Dendritic cell treated with granulocyte-macrophage colony-stimulating factor and Interleukin-4, amounts not matched to agents 40 ng/mL and 50 ng/mL, for 4 days (primary cell): ENCODE measurements at regions of chr7 and their contacts with region 1.

Region 1: DNA sequence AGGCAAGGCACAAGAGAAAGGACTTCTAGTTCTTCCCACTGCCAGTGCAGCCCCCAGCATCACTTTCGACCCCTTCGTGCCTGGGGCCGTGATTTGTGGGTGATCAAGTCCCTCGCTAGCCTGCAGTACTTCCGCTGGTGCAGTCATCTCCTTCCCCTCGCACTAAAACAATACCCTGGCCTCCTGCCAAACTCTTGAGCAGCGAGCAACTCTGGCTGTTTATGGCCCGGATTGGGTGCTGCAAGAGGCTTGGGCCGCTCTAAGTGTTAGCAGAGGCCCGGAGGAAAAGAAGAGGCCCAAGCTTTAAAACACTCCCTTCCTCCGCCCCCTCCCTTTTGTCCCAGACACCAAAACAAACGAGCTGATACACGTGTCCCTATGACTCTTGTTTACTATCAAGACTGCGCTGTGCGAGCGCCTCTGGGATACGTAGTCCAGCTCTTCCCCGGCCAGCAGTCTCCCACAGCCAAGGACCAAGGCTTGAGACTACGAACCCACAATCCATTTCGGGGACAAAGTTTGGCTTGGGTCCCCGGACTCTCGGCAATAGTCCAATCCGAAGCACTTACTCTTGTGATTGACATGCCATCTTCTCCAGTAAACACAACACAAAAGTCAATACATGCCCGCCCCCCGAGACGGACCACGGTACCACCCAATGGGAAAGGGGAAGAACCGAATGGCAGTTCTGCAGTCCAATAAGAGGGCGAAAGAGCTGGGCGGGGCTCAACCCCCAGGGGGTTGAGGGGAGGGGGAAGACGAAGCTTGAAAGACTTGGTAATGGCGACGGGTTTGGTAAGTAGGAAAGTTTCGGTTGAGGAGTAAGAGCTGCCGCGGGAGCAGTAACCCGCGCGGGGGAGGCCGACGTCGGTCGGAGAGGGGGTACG is at the start of gene HBP1:
- H3K4me3 Mint-ChIP-seq: peak within 1 kb of the TSS; percentile 89
- H3K27ac Mint-ChIP-seq: peak within 1 kb of the TSS; percentile 96
- H3K4me1 Mint-ChIP-seq: peaks cover 22% of the 10 kb centered on the region
- H3K27me3 Mint-ChIP-seq: peaks cover 4% of the 10 kb centered on the region

Region 2: GRCh38 chr7:106870983-106871410 is 297.5 kb before region 1 on chr7:
- intact Hi-C with region 1: loop called (anchors 5 kb)
- H3K4me3 Mint-ChIP-seq: peak overlapping the region; percentile 30
- H3K27ac Mint-ChIP-seq: peak overlapping the region; percentile 81
- H3K4me1 Mint-ChIP-seq: peaks cover 71% of the 10 kb centered on the region
- H3K27me3 Mint-ChIP-seq: no peaks in the 10 kb centered on the region

Region 3: DNA sequence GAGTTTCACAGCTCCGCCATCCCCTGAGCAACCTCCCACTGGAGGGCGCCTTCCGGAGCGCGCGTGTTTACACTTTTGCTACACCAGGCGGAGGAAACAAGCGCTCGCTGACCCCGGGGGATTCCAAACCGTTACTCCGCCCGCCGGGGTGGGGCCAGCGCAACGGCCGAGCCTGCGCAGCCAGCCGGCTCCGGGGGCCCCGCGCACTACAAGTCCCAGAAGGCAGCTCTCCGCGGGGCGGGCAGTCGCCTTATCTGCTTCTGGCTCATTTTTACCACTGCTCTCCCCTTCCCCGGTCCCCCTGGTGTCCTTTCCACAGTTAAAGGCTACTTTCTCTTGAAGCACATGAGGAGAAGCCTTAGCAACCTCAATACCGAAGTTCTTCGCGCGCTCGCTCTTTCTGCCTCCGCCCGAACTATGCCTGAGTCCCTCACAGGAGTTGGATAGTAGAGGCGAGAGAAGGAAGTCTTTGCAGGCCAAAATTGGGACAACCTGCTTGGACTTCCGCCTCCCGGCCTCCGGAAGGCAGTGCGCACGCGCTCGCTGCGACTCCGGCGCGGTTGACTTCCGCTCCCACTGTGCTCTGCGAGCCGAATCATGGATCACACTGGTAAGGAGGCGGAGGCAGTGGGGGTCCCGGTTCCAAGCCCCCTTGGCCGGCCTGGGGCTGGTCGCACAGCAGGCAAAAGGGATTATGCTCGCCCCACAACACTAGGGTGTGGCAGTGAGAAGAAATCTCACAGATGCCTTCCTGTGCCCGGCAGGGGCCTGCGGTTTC is 575.3 kb after region 1 on chr7 and contains the start of gene CBLL1:
- intact Hi-C with region 1: loop called (anchors 10 kb)
- H3K4me3 Mint-ChIP-seq: peak within 1 kb of the TSS; percentile 97
- H3K27ac Mint-ChIP-seq: peak within 1 kb of the TSS; percentile 99
- H3K4me1 Mint-ChIP-seq: peaks cover 22% of the 10 kb centered on the region
- H3K27me3 Mint-ChIP-seq: no peaks in the 10 kb centered on the region

Region 4: GRCh38 chr7:107902381-107902780 is 733.9 kb after region 1 on chr7:
- intact Hi-C with region 1: loop called (anchors 10 kb)
- H3K4me3 Mint-ChIP-seq: no peak overlapping the region
- H3K27ac Mint-ChIP-seq: no peak overlapping the region
- H3K4me1 Mint-ChIP-seq: peaks cover 27% of the 10 kb centered on the region
- H3K27me3 Mint-ChIP-seq: no peaks in the 10 kb centered on the region